Transverse colon (tissue), 4 donors: ENCODE measurements at regions of chr11 and their contacts with region 1.

Region 1: DNA sequence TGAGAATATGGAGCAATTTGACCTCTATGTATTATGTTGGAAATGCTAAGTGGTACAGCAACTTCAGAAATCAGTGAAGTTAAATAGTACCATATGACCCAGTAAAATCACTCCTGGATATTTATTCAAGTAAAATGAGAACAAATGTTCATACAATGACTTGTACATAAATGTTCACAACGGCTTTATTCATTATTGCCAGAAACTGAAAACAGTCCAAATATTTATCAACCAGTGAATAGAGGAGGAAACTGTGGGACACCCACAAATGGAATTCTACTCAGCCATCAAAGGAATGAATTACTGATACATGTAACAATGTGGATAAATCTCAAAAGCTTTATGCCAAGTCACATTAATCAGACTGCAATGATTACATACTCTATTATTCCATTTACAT is 416.3 kb downstream of the AASDHPPT start:
- DNase-seq: no peak
- H3K4me3 ChIP-seq: no peak overlapping the region
- H3K27ac ChIP-seq: no peak overlapping the region
- H3K4me1 ChIP-seq: no peaks in the 10 kb centered on the region
- H3K27me3 ChIP-seq: no peaks in the 10 kb centered on the region
- CTCF ChIP-seq: no peak
- EP300 ChIP-seq: no peak
- POLR2A ChIP-seq: no peak

Region 2: DNA sequence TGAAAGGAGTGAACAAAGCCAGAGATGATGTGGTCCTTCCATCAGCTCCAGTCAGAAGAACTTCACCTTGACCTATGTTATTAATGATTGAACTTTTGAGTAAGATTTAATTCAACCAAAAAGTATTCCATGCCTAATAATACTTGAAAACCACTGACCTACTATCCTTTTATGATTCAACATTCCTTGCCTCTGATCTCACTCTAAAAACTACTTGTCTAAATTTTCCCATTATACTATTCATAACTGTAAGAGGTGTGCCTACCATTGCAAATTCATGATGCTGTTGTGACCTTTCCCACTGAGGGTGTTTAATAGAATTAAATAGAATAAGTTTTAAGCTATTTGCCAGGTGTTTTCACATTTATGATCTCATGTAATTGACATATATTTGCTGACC is 689.2 kb after region 1 on chr11:
- in situ Hi-C with region 1: no loop called
- intact Hi-C with region 1: loop called (anchors 5 kb)
- DNase-seq: no peak
- H3K4me3 ChIP-seq: no peak overlapping the region
- H3K27ac ChIP-seq: no peak overlapping the region
- H3K4me1 ChIP-seq: no peaks in the 10 kb centered on the region
- H3K27me3 ChIP-seq: no peaks in the 10 kb centered on the region
- CTCF ChIP-seq: no peak
- EP300 ChIP-seq: no peak
- POLR2A ChIP-seq: no peak